A549 (cell line): ENCODE measurements at regions of chr11 and their contacts with region 1.

Region 1: GRCh38 chr11:11787305-11788062 is 54.3 kb upstream of the USP47 start:
- DNase-seq: peak; percentile 64 to 70
- ATAC-seq: peak; percentile 91 to 98
- H3K4me3 ChIP-seq: no peak overlapping the region
- H3K27ac ChIP-seq: no peak overlapping the region
- H3K4me1 ChIP-seq: no peaks in the 10 kb centered on the region
- CTCF ChIP-seq: peak; percentile 96
- EP300 ChIP-seq: no peak
- POLR2A ChIP-seq: no peak
- RAD21 ChIP-seq: peak; percentile 98

Region 2: GRCh38 chr11:10792398-10792975 is 995.0 kb before region 1 on chr11:
- CTCF ChIA-PET with region 1: interaction called, 45 read pairs
- POLR2A ChIA-PET with region 1: no interaction called
- DNase-seq: peak; percentile 85 to 86
- ATAC-seq: peak; percentile 83 to 94
- H3K4me3 ChIP-seq: no peak overlapping the region
- H3K27ac ChIP-seq: peak overlapping the region; percentile 16 to 68; a peak in 4 of 6 replicates
- H3K4me1 ChIP-seq: peaks cover 16% of the 10 kb centered on the region
- CTCF ChIP-seq: peak; percentile 90
- EP300 ChIP-seq: no peak
- POLR2A ChIP-seq: no peak
- RAD21 ChIP-seq: peak; percentile 97 to 98

Region 3: GRCh38 chr11:11022125-11022730 is 765.3 kb before region 1 on chr11:
- CTCF ChIA-PET with region 1: interaction called, 111 read pairs
- POLR2A ChIA-PET with region 1: no interaction called
- DNase-seq: peak; percentile 16 to 55
- ATAC-seq: peak; percentile 48 to 77; a peak in 3 of 6 replicates
- H3K4me3 ChIP-seq: no peak overlapping the region
- H3K27ac ChIP-seq: peak overlapping the region; percentile 18 to 20; a peak in 2 of 6 replicates
- H3K4me1 ChIP-seq: peaks cover 9% of the 10 kb centered on the region
- CTCF ChIP-seq: peak; percentile 76
- EP300 ChIP-seq: no peak
- POLR2A ChIP-seq: no peak
- RAD21 ChIP-seq: peak; percentile 78 to 86

Region 4: DNA sequence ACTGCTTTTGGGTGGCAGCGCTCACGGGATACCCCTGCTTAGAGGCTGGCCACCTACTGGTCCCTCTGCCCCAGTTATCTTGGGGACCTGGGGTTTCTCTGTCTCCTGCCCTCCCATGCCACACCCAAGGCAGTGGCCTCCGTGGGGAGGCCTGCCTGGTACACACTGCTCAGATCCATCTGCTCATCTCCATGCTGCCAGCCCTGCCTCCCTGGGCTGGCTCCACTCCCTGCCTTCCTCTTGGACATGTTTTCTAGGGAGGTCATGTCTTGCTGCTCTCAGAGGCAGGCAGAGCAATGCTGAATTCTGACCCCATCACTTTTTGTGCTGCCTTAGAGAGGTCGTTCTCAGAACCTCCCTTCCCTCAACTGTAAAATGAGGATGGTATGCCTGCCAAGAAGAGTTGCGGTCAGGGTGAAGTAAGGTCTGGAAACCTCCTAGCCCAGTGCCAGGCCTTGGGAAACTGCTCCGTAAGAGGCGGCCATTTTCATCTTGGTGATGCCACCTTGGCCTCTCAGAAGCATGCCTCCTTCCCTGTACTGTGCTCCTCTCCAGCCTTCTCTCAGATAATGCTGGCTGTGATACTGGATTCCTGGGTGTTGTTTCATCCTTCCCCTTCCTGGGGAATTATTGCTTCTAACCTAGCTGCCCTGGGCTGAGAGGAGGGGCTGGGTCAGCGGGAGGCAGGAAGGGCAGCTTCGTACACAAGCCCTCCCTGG is 743.2 kb before region 1 on chr11:
- CTCF ChIA-PET with region 1: interaction called, 128 read pairs
- POLR2A ChIA-PET with region 1: no interaction called
- DNase-seq: no peak
- ATAC-seq: no peak
- H3K4me3 ChIP-seq: no peak overlapping the region
- H3K27ac ChIP-seq: no peak overlapping the region
- H3K4me1 ChIP-seq: no peaks in the 10 kb centered on the region
- CTCF ChIP-seq: no peak
- EP300 ChIP-seq: no peak
- POLR2A ChIP-seq: no peak
- RAD21 ChIP-seq: no peak

Region 5: GRCh38 chr11:11584446-11584810 is 203.1 kb before region 1 on chr11:
- CTCF ChIA-PET with region 1: interaction called, 11 read pairs
- POLR2A ChIA-PET with region 1: no interaction called
- DNase-seq: peak; percentile 80 to 82
- ATAC-seq: peak; percentile 90 to 98
- H3K4me3 ChIP-seq: no peak overlapping the region
- H3K27ac ChIP-seq: peak overlapping the region; percentile 49 to 81
- H3K4me1 ChIP-seq: peaks cover 39% of the 10 kb centered on the region
- CTCF ChIP-seq: no peak
- EP300 ChIP-seq: no peak
- POLR2A ChIP-seq: no peak
- RAD21 ChIP-seq: 0 out of 5 replicates have a peak, but pooled peaks of 1 of the 2 experiments have one; percentile 20

Region 6: GRCh38 chr11:11798586-11799438 is 11.3 kb after region 1 on chr11:
- CTCF ChIA-PET with region 1: interaction called, 22 read pairs
- POLR2A ChIA-PET with region 1: no interaction called
- DNase-seq: peak; percentile 77 to 78
- ATAC-seq: peak; percentile 96 to 99
- H3K4me3 ChIP-seq: no peak overlapping the region
- H3K27ac ChIP-seq: peak overlapping the region; percentile 47 to 73; a peak in 4 of 6 replicates
- H3K4me1 ChIP-seq: peaks cover 4% of the 10 kb centered on the region; the same call in 2 of the 3 replicates
- CTCF ChIP-seq: peak; percentile 95
- EP300 ChIP-seq: no peak
- POLR2A ChIP-seq: no peak
- RAD21 ChIP-seq: peak; percentile 92

Region 7: GRCh38 chr11:12043959-12044819 is 256.7 kb after region 1 on chr11:
- CTCF ChIA-PET with region 1: interaction called, 21 read pairs
- POLR2A ChIA-PET with region 1: no interaction called
- DNase-seq: peak; percentile 80 to 91
- ATAC-seq: peak; percentile 88 to 91
- H3K4me3 ChIP-seq: no peak overlapping the region
- H3K27ac ChIP-seq: peak overlapping the region; percentile 85 to 86
- H3K4me1 ChIP-seq: peaks cover 44% of the 10 kb centered on the region
- CTCF ChIP-seq: peak; percentile 97
- EP300 ChIP-seq: peak; percentile 18 to 53; a peak in 2 of 5 replicates
- POLR2A ChIP-seq: no peak
- RAD21 ChIP-seq: peak; percentile 99